AG04449 (cell line): ENCODE measurements at regions of chr19 and their contacts with region 1.

Region 1: GRCh38 chr19:38544034-38544958 is 73.5 kb downstream of the MAP4K1 start:
- DNase-seq: peak; percentile 12
- H3K4me3 ChIP-seq: no peak overlapping the region
- CTCF ChIP-seq: peak; percentile 15

Region 2: GRCh38 chr19:38464421-38465082 is 79.7 kb before region 1 on chr19:
- CTCF ChIA-PET with region 1: no interaction called
- POLR2A ChIA-PET with region 1: no interaction called
- DNase-seq: no peak
- H3K4me3 ChIP-seq: no peak overlapping the region
- CTCF ChIP-seq: no peak

Region 3: DNA sequence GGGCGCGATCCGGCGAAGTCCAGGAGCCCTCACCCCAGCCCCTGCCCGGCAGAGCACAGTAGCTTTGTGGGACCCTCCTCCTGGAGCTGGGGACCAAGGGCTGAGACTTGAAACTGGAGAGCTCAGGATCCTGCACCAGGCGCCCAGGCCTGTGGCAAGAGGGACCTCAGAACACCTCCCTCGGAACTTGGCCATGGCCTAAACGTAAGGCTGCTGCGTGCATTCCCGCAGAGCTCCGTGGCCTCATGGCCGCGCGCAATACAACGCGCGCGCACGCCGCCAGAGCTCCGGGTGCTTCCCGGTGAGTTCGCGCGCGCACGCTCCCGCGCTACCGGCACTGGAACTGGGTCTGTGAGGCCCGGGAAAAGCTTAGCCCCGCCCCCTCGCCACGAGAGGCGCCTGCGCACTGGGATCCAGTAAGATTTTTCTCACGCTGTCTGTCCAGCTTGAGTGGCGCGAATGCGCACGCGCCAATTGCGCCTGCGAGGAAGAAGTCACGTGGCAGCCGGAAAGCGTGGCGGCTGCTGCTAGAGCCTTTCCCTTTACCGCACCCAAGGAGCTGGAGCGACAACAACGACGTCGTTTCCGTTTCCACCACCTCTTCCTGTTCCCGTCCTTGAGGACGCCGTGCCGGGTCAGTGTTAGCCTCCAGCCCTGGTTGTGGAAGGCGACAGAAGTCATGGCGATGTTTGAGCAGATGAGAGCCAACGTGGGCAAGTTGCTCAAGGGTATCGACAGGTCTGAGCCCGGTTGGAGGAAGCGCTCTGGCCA is 74.5 kb after region 1 on chr19 and contains the start of gene EIF3K:
- CTCF ChIA-PET with region 1: interaction called, 12 read pairs
- POLR2A ChIA-PET with region 1: no interaction called
- DNase-seq: peak; percentile 91
- H3K4me3 ChIP-seq: peak within 1 kb of the TSS; percentile 86
- CTCF ChIP-seq: no peak

Region 4: GRCh38 chr19:38658462-38659306 is 114.4 kb after region 1 on chr19:
- CTCF ChIA-PET with region 1: no interaction called
- POLR2A ChIA-PET with region 1: no interaction called
- DNase-seq: peak; percentile 99
- H3K4me3 ChIP-seq: no peak overlapping the region; the same call in none of the 2 replicates
- CTCF ChIP-seq: no peak